ENCODE measurements at regions of chr17 and their contacts with region 1.

Region 1: GRCh38 chr17:78421484-78422266 is 43.2 kb downstream of the PGS1 start:
- DNase-seq: peak; percentile 70
- H3K4me3 Mint-ChIP-seq: no peak overlapping the region
- H3K27ac Mint-ChIP-seq: no peak overlapping the region
- H3K4me1 Mint-ChIP-seq: peaks cover 7% of the 10 kb centered on the region
- H3K27me3 Mint-ChIP-seq: no peaks in the 10 kb centered on the region
- CTCF ChIP-seq: peak; percentile 97

Region 2: GRCh38 chr17:78250891-78251794 is 170.5 kb before region 1 on chr17:
- CTCF ChIA-PET with region 1: interaction called, 54 read pairs
- POLR2A ChIA-PET with region 1: interaction called, 5 read pairs
- intact Hi-C with region 1: loop called (anchors 1 kb)
- DNase-seq: peak; percentile 83
- H3K4me3 Mint-ChIP-seq: no peak overlapping the region
- H3K27ac Mint-ChIP-seq: no peak overlapping the region
- H3K4me1 Mint-ChIP-seq: peaks cover 12% of the 10 kb centered on the region
- H3K27me3 Mint-ChIP-seq: no peaks in the 10 kb centered on the region
- CTCF ChIP-seq: peak; percentile 98

Region 3: DNA sequence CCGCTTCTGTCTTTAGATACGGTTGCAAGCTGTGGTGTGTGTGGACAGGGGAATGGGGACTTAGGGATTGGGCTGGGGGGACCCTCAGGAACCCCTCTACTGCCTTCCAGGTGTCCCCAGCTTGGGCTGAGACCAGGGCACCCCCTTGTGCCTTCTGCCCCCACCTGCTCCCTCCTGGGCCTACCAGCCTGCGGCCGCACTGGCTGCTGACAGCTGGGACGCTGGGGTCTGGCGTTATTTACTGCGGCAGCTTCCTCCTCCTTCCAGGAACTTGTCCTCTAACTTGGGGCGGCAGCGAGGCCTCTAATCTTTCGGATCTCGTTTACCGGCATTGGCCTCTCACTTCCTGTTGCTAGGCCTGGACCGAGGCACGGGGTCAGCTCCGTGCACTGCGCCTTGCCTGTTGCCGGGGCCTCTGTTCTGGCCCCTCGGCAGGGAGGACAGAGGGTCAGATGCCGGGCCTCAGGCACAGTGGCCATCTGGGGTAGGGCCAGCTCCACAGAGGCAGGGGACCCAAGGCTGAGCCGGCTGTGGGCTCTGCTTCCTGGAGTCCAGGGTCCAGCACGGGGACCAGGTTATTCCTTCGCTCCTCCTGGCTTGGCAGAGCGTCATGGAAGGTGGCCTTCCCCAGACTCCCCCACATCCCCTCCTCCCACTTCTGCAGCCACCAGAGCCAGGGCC is 158.5 kb before region 1 on chr17:
- CTCF ChIA-PET with region 1: no interaction called
- POLR2A ChIA-PET with region 1: no interaction called
- intact Hi-C with region 1: no loop called
- DNase-seq: no peak
- H3K4me3 Mint-ChIP-seq: no peak overlapping the region
- H3K27ac Mint-ChIP-seq: no peak overlapping the region
- H3K4me1 Mint-ChIP-seq: no peaks in the 10 kb centered on the region
- H3K27me3 Mint-ChIP-seq: no peaks in the 10 kb centered on the region
- CTCF ChIP-seq: no peak

Region 4: DNA sequence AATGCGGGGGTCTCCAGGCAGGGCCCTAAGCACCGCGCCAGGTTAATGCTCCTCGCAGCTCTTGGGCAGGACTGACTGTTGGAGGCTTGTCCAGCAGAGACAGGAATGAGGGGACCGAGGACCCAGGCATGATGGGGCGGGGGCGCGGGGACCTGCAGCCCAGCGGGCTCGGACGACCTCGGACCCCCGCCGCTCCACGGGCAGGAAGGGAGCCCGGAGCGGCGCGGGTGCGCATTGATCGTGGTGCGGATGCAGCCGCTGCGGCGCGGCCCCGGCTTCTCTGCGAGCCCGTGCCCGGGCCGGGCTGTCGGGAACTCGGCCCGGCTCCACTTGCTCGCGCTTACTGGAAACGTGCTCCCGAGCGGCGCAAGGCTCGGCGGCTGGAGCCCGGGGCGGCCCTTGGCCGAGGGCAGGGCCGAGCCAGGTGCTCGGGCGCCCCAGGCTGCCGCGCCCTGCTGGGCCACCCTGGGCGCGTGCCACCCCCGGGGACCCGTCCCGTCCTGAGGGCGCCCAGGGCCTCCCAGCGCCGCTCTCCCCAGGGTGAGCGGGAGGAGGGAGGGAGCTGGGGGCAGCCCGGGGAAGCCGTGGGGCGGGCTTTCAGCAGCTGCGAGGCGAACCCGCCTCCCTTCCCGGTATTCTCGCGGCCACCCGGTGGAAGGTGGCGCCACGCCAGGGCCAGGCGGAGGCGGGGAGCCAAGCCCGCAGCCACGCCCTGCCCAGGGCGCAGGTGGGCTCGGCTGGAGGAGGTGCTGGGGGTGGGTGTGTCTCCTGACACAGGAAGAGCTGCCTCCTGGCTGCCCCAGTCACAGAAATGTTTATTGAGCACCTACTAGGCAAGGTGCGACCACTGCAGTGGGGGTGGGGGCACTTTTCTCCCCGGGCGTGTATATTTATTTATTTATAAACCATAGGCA is 107.7 kb before region 1 on chr17:
- CTCF ChIA-PET with region 1: interaction called, 10 read pairs
- POLR2A ChIA-PET with region 1: interaction called, 3 read pairs
- intact Hi-C with region 1: no loop called
- DNase-seq: peak; percentile 92
- H3K4me3 Mint-ChIP-seq: peak overlapping the region; percentile 50
- H3K27ac Mint-ChIP-seq: peak overlapping the region; percentile 31
- H3K4me1 Mint-ChIP-seq: peaks cover 42% of the 10 kb centered on the region
- H3K27me3 Mint-ChIP-seq: peaks cover 19% of the 10 kb centered on the region
- CTCF ChIP-seq: no peak

Region 5: DNA sequence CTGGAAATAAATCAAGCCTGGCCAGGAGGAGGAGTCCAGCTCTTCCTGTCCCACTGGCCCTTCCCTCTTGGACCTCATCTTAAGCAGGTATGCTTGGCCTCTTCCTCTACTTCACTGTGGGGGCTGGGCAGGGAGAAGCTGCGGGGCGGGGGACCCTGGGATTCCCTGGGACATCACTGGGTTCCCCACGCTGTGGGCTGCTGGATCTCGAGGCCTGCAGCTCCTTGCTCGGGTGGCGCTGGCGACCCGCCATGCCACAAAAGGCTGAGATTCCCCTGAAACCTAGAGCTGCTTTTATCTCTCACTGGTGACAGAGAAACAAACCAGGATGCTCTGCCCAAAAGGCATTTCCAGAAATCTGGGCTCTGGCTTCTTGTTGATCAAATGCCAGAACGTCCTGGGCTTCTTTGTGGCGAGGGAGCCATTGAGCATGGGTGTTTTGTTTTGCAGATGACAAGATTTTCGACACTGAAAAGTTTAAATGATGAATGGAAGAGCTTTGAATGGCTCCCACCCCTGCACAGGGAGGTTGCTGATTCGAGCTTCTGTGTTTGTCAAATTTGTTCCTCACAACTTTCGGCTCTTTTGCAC is 51.8 kb before region 1 on chr17:
- CTCF ChIA-PET with region 1: interaction called, 12 read pairs
- POLR2A ChIA-PET with region 1: no interaction called
- intact Hi-C with region 1: no loop called
- DNase-seq: no peak
- H3K4me3 Mint-ChIP-seq: no peak overlapping the region
- H3K27ac Mint-ChIP-seq: no peak overlapping the region
- H3K4me1 Mint-ChIP-seq: peaks cover 7% of the 10 kb centered on the region
- H3K27me3 Mint-ChIP-seq: no peaks in the 10 kb centered on the region
- CTCF ChIP-seq: no peak

Region 6: GRCh38 chr17:78409191-78409928 is 12.3 kb before region 1 on chr17:
- CTCF ChIA-PET with region 1: interaction called, 16 read pairs
- POLR2A ChIA-PET with region 1: no interaction called
- intact Hi-C with region 1: no loop called
- DNase-seq: peak; percentile 54
- H3K4me3 Mint-ChIP-seq: no peak overlapping the region
- H3K27ac Mint-ChIP-seq: no peak overlapping the region
- H3K4me1 Mint-ChIP-seq: peaks cover 10% of the 10 kb centered on the region
- H3K27me3 Mint-ChIP-seq: no peaks in the 10 kb centered on the region
- CTCF ChIP-seq: no peak

Region 7: DNA sequence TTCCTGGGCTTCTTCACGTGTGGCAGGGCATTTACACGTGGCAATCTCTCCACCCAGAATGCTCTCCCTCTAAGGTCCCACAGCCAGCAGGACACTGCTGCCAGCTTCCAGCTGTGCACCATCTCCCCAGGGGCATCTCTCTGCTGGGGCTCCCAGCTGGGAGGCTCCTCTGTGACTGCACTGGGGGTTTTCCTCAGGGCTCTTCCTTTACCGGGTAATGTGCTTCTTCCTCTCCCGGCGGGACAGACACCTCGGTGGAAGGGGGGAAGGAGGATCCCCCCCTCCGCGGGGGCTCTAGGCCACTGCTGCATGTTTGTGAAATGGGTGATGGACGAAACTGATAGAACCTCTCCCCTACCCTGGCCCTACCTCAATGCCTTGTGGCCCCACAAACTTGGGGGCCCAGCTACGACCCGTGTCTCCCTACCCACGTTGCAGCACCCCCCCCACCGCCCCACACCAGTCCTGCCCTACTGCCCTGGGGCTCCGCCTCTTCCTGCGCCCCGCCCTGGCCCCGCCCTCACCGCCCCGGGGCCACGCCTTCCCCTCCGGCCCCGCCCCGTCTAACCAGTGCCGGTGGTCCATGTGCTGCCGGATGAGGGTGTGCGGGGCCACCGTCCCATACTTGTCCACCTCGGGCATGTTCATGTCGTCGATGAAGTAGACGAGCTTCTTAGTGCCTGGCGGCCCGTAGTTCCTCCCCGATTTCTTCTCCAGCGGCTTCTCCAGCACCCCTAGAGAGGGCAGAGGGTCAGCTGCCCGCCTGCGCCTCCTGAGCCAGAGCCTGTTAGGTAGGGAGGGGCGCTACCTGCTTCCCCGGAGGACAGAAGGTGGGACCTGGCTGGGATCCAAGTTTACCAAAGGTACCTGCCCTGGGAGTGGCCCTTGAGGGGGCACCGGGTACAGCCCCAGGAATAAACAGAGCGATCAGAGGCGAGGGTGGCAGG is 62.9 kb after region 1 on chr17:
- CTCF ChIA-PET with region 1: no interaction called
- POLR2A ChIA-PET with region 1: no interaction called
- intact Hi-C with region 1: no loop called
- DNase-seq: no peak
- H3K4me3 Mint-ChIP-seq: no peak overlapping the region
- H3K27ac Mint-ChIP-seq: no peak overlapping the region
- H3K4me1 Mint-ChIP-seq: no peaks in the 10 kb centered on the region
- H3K27me3 Mint-ChIP-seq: peaks cover 30% of the 10 kb centered on the region
- CTCF ChIP-seq: no peak